Sigmoid colon (tissue), 7 donors: ENCODE measurements at regions of chr1 and their contacts with region 1.

Region 1: GRCh38 chr1:1307908-1308755 is at the starts of genes ACAP3 and PUSL1:
- DNase-seq: peak; percentile 97
- H3K4me3 ChIP-seq: peak within 1 kb of the TSS; percentile 74 to 98 (median 84)
- H3K27ac ChIP-seq: peak within 1 kb of the TSS; percentile 92 to 98 (median 96)
- H3K4me1 ChIP-seq: peaks cover 0 to 60% (median 56%) of the 10 kb centered on the region in 4 donors
- H3K27me3 ChIP-seq: no peaks in the 10 kb centered on the region
- CTCF ChIP-seq: no peak
- EP300 ChIP-seq: no peak
- POLR2A ChIP-seq: peak in 1 of 2 donors; percentile 33
- total RNA-seq, gene ACAP3: 21.4 to 57.1 (median 33.4) TPM
- total RNA-seq, gene PUSL1: 15.7 to 24.0 (median 20.4) TPM

Region 2: DNA sequence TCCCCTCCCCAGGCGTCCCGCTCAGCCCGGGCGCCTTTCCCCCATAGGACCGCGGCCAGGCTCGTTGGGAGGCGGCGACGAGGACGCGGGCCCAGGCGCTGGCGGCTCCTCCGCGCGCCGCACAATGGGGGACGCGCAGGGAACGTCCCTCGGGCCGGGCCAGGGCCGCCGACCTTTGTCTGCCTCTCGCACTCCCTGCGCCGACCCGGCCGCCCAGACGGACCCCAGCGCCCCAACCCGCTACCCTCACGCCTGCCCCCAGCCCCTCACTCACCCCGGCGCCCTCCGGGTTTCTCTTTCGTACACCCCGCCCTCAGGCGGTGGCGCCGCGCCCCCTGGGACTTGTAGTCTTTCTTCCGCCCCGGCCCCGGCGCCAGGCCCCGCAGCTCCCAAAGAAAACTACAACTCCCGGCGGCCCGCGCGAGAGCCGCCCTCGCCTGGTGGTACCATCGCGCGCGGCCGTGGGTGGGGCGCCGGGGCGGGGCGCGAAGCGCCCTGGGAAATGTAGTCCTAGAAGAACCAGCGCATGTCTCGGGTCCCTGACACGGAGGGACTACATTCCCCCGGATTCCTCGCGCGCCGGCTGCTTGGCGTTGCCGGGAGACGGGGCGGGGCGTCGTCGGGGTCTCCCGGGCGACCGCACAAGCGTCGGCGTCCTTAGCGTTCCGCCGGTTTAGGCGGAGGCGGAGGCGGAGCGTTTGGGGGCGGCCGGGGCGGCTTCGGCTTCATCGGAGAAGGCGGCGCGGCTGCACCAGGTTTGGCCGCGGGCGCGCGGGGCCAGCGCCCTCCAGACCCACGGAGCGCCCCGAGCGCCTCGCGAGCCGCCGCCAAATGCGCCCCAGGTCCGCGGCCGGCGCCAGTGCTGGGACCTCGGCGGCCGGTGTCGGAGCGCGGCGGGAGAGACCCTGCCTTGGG is 192.1 kb before region 1 on chr1 and contains the start of gene C1orf159:
- intact Hi-C with region 1: loop called (anchors 5 kb)
- DNase-seq: peak; percentile 99
- H3K4me3 ChIP-seq: peak within 1 kb of the TSS; percentile 69 to 99 (median 93)
- H3K27ac ChIP-seq: peak within 1 kb of the TSS; percentile 74 to 87 (median 82)
- H3K4me1 ChIP-seq: peaks cover 0 to 19% (median 15%) of the 10 kb centered on the region in 4 donors
- H3K27me3 ChIP-seq: peaks cover 0 to 18% (median 0%) of the 10 kb centered on the region in 3 donors
- CTCF ChIP-seq: no peak
- EP300 ChIP-seq: no peak
- POLR2A ChIP-seq: no peak
- total RNA-seq, gene C1orf159: 7.9 to 13.8 (median 10.4) TPM

Region 3: GRCh38 chr1:1349256-1350012 is 41.3 kb after region 1 on chr1 and contains the start of gene DVL1:
- intact Hi-C with region 1: loop called (anchors 2 kb)
- DNase-seq: peak; percentile 87
- H3K4me3 ChIP-seq: peak within 1 kb of the TSS; percentile 58 to 80 (median 70)
- H3K27ac ChIP-seq: peak within 1 kb of the TSS; percentile 87 to 96 (median 95)
- H3K4me1 ChIP-seq: peaks cover 0 to 72% (median 61%) of the 10 kb centered on the region in 4 donors
- H3K27me3 ChIP-seq: no peaks in the 10 kb centered on the region
- CTCF ChIP-seq: peak; percentile 32 to 61 (median 53)
- EP300 ChIP-seq: no peak
- POLR2A ChIP-seq: no peak
- total RNA-seq, gene DVL1: 50.7 to 85.0 (median 61.9) TPM

Region 4: GRCh38 chr1:1374929-1375662 is 67.0 kb after region 1 on chr1 and contains the start of gene AURKAIP1:
- intact Hi-C with region 1: loop called (anchors 2 kb)
- DNase-seq: peak; percentile 100
- H3K4me3 ChIP-seq: peak within 1 kb of the TSS; percentile 69 to 100 (median 96)
- H3K27ac ChIP-seq: peak within 1 kb of the TSS; percentile 92 to 98 (median 95)
- H3K4me1 ChIP-seq: peaks cover 2 to 41% (median 34%) of the 10 kb centered on the region in 4 donors
- H3K27me3 ChIP-seq: no peaks in the 10 kb centered on the region
- CTCF ChIP-seq: peak in 1 of 4 experiments; percentile 18
- EP300 ChIP-seq: peak in 1 of 4 donors; percentile 71
- POLR2A ChIP-seq: peak; percentile 24 to 42
- total RNA-seq, gene AURKAIP1: 89.3 to 143 (median 124) TPM

Region 5: GRCh38 chr1:1387098-1388077 is 79.3 kb after region 1 on chr1:
- intact Hi-C with region 1: no loop called
- DNase-seq: no peak
- H3K4me3 ChIP-seq: no peak overlapping the region
- H3K27ac ChIP-seq: no peak overlapping the region
- H3K4me1 ChIP-seq: no peaks in the 10 kb centered on the region
- H3K27me3 ChIP-seq: no peaks in the 10 kb centered on the region
- CTCF ChIP-seq: no peak
- EP300 ChIP-seq: no peak
- POLR2A ChIP-seq: no peak